Activated CD4-positive, alpha-beta T cell treated with anti-CD3 and anti-CD28 coated beads, Interleukin-2, amount 10 ng/mL, durations not matched to agents 24 days and 14 days (primary cell): ENCODE measurements at regions of chr12 and their contacts with region 1.

Region 1: DNA sequence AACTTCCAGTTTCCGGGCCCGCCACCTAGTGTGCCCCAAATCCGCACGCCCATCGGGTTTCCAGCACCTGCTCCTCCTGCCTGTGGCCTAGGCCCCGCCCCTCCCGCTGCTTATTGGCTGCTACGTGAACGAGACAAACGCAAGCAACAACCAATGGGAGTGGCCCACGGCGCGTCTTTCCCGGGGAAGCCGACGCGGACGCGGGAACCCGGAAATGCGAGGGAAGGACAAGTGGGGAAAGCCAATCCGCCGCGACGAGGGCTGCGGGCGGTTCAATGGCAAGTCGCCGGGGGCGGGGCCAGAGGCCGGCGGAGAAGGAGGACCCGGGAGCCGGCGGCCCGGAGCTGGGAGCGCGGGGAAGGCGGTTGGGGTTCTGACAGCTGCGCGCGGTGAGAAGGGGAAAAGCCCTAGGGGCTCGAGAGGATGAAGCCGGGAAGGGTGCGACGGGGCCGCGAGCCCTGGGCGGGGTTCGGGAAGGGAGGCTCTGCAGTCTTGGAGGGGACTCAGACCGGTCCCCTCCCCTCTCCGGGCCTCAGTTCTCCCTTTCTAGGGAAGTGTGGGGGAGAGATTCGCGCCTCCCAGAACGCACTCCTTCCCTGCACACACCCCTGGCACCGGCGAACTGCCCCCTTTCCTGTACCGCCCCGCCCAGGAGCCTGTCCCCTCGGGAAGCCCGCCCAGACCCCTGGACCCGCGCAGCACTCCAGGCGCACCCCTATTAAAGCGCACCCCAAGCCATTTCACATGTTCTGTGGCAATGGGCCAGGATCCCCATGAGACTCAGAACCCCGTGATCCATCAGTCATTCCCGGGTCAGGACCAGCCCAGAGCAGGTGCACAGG is at the start of gene FICD:
- DNase-seq: peak; percentile 100
- H3K4me3 Mint-ChIP-seq: peak within 1 kb of the TSS; percentile 94
- H3K27ac Mint-ChIP-seq: peak within 1 kb of the TSS; percentile 84
- H3K4me1 Mint-ChIP-seq: peaks cover 31% of the 10 kb centered on the region
- H3K27me3 Mint-ChIP-seq: no peaks in the 10 kb centered on the region
- total RNA-seq, gene FICD: 5.9 and 6.6 TPM in 2 replicates

Region 2: GRCh38 chr12:107685360-107686248 is 829.6 kb before region 1 on chr12 and contains the start of gene PWP1:
- intact Hi-C with region 1: loop called (anchors 2 kb)
- DNase-seq: peak; percentile 99
- H3K4me3 Mint-ChIP-seq: peak within 1 kb of the TSS; percentile 93
- H3K27ac Mint-ChIP-seq: peak within 1 kb of the TSS; percentile 92
- H3K4me1 Mint-ChIP-seq: peaks cover 26% of the 10 kb centered on the region
- H3K27me3 Mint-ChIP-seq: peaks cover 2% of the 10 kb centered on the region
- total RNA-seq, gene PWP1: 56.3 and 63.2 TPM in 2 replicates

Region 3: DNA sequence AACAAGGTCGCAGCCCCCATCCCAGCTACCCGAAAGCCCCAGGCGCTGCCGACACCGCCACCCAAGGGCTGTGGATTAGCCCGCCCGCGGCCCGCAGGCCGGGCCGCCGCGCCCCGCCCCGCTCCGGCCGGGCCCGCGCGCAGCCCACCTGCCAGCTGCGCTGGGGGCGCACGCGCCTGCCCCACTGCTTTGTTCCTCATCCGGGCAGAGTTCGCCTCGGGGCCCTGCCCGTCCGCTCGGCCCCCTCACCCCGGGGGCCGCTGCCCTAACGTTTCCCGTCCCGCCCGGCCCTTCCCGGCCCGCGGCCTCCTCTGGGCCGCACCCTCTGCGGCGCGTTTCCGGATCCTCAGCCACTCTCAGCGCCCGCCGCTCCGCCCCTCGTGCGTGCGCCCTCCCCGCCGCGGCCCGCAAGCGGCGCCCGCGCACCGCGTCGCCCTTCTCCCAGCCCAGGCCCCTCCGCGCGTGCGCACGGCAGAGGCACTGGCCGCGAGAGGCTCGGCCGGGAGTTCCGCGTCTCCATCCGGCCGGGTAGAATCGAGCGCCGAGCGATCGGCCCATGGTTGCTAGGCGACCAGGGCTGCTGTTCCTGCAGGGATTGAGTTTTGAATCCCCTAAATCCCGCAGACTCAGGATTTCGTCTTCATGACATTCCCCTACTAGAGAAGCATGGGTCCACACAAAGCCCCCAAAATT is 754.2 kb before region 1 on chr12 and contains the start of gene PRDM4:
- intact Hi-C with region 1: loop called (anchors 10 kb)
- DNase-seq: peak; percentile 98
- H3K4me3 Mint-ChIP-seq: peak within 1 kb of the TSS; percentile 93
- H3K27ac Mint-ChIP-seq: peak within 1 kb of the TSS; percentile 88
- H3K4me1 Mint-ChIP-seq: peaks cover 26% of the 10 kb centered on the region
- H3K27me3 Mint-ChIP-seq: peaks cover 7% of the 10 kb centered on the region
- total RNA-seq, gene PRDM4: 30.2 and 31.1 TPM in 2 replicates

Region 4: DNA sequence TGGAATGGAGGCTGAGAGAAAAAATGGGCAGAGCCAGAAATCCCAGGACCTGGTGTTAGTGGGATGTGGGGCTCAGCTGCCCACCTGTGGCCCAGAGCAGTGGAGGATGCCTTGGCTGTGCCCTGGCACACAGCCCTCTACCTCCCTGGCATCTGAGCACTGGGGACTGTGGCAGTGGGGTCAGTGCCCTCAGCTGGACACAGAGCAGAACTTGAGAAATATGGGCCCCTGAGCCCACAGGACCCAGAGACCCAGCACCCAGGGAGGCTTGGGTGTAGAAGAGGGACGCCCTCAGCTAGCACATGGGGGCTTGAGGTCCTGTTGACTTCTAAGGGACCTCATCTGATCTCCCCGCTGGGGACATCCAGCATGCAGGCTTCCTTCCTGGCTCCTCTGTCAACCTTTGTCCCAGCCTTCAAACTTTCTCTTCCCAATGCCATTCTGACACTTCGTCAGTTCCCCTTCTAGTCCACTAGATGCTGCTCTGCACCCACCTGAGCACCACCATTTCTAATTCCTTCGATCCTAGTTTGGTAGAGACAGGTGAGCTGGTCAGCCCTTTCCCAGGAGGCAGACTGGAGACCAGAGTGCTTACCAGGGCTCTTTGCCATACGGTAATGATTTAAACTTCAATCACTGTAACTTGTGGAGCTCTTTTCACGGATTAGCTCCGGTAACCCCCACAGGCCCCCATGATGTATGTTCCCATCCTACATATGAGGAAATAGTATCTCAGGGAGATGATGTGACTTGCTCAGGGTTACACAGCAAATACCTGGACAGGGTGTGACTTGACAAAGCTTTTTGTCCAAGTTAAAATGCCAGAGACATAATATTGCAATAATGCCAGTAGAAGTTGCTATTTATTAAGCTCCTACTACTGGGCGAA is 597.0 kb before region 1 on chr12:
- intact Hi-C with region 1: loop called (anchors 2 kb)
- DNase-seq: no peak
- H3K4me3 Mint-ChIP-seq: no peak overlapping the region
- H3K27ac Mint-ChIP-seq: no peak overlapping the region
- H3K4me1 Mint-ChIP-seq: no peaks in the 10 kb centered on the region
- H3K27me3 Mint-ChIP-seq: peaks cover 19% of the 10 kb centered on the region

Region 5: GRCh38 chr12:107992870-107993451 is 522.2 kb before region 1 on chr12:
- intact Hi-C with region 1: loop called (anchors 1 kb)
- DNase-seq: no peak
- H3K4me3 Mint-ChIP-seq: no peak overlapping the region
- H3K27ac Mint-ChIP-seq: no peak overlapping the region
- H3K4me1 Mint-ChIP-seq: no peaks in the 10 kb centered on the region
- H3K27me3 Mint-ChIP-seq: peaks cover 15% of the 10 kb centered on the region

Region 6: DNA sequence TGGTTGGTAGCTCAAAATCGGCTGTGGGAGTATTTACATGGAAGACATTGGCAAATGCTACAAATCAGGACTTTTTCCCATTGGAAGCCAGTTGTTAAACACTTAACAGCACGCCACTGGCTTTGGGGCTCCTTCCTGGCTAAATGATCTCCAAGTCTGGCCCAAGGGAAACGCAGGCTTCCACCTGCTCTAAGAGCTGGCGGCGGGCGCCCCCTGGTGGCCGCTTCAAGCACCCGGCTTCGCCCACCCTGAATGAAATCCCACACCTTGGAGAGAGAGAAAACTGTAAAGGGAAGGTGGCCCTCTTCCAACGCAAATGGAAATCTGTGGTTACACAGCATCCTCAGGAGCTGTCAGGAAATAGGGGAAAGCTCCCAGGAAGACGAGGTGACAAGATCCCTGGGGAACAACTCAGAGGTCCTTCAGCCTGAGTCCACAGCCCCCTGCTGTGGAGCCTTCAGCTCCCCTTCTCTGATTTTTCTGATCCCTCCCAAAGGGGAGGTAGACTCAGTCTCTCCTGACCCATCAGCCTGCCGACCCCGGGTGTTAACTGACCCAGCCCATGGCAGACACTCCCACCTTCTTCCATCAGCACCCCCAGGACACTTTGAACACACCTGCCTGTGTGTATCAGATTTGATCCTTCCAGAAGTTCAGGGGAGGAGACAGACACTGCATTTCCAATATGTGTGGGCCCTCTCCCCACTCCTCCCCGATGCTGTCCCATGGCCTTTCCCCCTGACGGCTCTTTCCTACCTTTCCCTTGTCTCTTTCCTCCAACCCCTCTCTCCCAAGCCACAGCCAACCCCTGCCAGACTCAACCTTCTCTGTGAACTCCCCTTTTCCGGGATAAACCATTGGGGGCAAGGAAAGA is 103.1 kb after region 1 on chr12:
- intact Hi-C with region 1: loop called (anchors 5 kb)
- DNase-seq: peak; percentile 93
- H3K4me3 Mint-ChIP-seq: no peak overlapping the region
- H3K27ac Mint-ChIP-seq: peak overlapping the region; percentile 83
- H3K4me1 Mint-ChIP-seq: peaks cover 50% of the 10 kb centered on the region
- H3K27me3 Mint-ChIP-seq: no peaks in the 10 kb centered on the region